K562 (cell line): ENCODE measurements at regions of chr10 and their contacts with region 1.

Region 1: GRCh38 chr10:74262856-74263255 is 111.8 kb downstream of the ADK start:
- DNase-seq: no peak
- ATAC-seq: no peak
- H3K4me3 ChIP-seq: no peak overlapping the region
- H3K27ac ChIP-seq: no peak overlapping the region
- H3K4me1 ChIP-seq: no peaks in the 10 kb centered on the region
- H3K27me3 ChIP-seq: no peaks in the 10 kb centered on the region
- CTCF ChIP-seq: no peak
- EP300 ChIP-seq: no peak
- POLR2A ChIP-seq: no peak
- RAD21 ChIP-seq: no peak

Region 2: DNA sequence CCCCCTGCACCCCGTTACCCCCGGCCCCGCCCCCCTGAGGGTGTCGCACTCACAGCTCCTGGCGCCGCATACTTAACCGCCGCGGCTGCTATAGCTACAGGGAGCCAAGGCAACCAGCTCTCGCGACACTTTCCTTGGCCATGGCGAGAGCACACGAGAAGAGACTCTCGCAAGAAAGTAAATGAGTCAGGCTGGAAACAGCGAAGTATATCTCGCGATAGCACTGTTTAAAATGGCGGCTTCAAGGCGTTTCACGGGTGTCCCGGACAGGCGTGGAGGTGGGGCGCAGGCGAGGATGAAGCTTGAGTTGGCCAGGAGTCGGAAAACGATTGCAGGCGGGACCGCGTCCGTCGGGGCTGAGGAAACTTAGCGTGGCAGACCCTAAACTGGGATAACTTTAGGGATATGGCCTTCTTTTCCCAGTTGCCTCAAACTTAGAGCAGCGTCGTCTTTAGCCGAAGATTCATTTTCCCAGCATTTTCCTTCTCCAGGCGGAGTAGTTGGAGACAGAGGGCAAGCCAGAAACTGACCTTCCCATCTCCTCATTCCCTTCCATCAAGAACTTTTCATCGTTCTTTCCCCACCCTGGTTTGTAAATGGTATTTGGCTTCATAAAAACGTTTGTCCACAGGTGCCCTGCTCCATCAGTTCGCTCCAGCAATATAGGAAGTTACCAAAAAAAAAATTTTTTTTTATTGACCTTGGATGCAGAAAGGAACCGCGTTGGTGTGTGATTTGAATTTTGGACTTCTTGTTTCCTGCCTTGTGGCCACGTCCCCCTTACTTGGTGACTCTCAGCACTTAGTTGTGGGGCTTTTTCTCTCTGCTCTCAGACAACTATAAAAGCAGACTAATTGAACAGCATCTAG is 636.7 kb before region 1 on chr10:
- CTCF ChIA-PET with region 1: no interaction called
- POLR2A ChIA-PET with region 1: no interaction called
- in situ Hi-C with region 1: no loop called
- intact Hi-C with region 1: no loop called
- DNase-seq: peak; percentile 97 to 99 (median 98)
- ATAC-seq: peak; percentile 95
- H3K4me3 ChIP-seq: peak overlapping the region; percentile 86
- H3K27ac ChIP-seq: peak overlapping the region; percentile 87
- H3K4me1 ChIP-seq: peaks cover 7 to 14% of the 10 kb centered on the region in 2 experiments; a peak in 4 of 5 replicates
- H3K27me3 ChIP-seq: no peaks in the 10 kb centered on the region
- CTCF ChIP-seq: 0 out of 6 replicates have a peak, but pooled peaks of 1 of the 3 experiments have one; percentile 10
- EP300 ChIP-seq: no peak; the same call in 1 of the 2 replicates
- POLR2A ChIP-seq: peak; percentile 98
- RAD21 ChIP-seq: no peak

Region 3: GRCh38 chr10:73810735-73811465 is 452.0 kb before region 1 on chr10:
- CTCF ChIA-PET with region 1: no interaction called
- POLR2A ChIA-PET with region 1: no interaction called
- in situ Hi-C with region 1: no loop called
- intact Hi-C with region 1: no loop called
- DNase-seq: peak; percentile 65 to 87 (median 70)
- ATAC-seq: peak; percentile 57
- H3K4me3 ChIP-seq: peak overlapping the region; percentile 85
- H3K27ac ChIP-seq: peak overlapping the region; percentile 85
- H3K4me1 ChIP-seq: peaks cover 30 to 48% of the 10 kb centered on the region in 2 experiments
- H3K27me3 ChIP-seq: no peaks in the 10 kb centered on the region
- CTCF ChIP-seq: no peak
- EP300 ChIP-seq: no peak
- POLR2A ChIP-seq: no peak
- RAD21 ChIP-seq: no peak

Region 4: DNA sequence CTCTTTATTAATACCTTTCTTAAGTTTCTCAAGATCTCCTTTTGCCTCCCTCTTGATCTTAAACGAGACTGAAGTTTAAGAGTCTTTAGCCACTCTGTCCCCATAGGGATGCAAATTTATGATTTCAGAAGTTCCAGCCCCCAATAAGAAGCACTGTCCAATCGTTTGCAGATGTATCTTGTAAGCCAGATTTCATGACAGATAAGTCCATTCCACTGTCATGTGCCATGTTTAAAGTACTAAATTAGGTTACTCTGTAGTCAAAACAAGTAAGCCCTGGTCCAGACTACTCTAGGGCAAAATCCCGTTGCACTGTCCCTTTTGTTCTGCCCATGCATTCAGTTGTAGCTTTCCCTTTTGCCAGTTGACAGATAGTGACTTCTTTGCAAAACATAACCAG is 406.4 kb after region 1 on chr10:
- CTCF ChIA-PET with region 1: no interaction called
- POLR2A ChIA-PET with region 1: no interaction called
- in situ Hi-C with region 1: no loop called
- intact Hi-C with region 1: no loop called
- DNase-seq: no peak
- ATAC-seq: no peak
- H3K4me3 ChIP-seq: no peak overlapping the region
- H3K27ac ChIP-seq: no peak overlapping the region
- H3K4me1 ChIP-seq: no peaks in the 10 kb centered on the region
- H3K27me3 ChIP-seq: no peaks in the 10 kb centered on the region
- CTCF ChIP-seq: no peak
- EP300 ChIP-seq: no peak
- POLR2A ChIP-seq: no peak
- RAD21 ChIP-seq: no peak

Region 5: DNA sequence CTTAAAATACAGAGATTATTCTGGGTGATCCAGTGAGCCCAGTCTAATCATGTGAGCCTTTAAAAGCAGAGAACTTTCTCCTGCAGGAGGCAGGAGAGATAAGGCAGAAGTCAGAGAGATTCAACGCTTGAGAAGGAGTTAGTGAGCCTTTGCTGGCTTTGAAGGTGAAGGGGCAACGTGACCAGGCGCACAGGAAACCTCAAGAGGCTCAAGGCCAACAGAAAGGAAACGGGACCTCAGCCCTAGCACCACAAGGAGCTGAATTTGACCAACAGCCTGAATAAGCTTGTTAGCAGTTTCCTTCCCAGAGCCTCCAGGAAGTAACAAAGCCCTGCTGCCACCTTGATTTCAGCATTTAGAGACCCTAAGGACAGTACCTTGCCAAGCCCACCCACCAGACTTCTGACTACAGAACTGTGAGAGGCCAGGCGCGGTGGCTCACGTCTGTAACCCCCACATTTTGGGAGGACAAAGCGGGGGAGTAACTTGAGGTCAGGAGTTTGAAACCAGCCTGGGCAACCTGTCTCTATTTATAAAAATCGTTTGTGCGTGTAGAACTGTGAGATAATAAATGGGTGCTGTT is 476.2 kb after region 1 on chr10:
- CTCF ChIA-PET with region 1: no interaction called
- POLR2A ChIA-PET with region 1: no interaction called
- in situ Hi-C with region 1: no loop called
- intact Hi-C with region 1: loop called (anchors 5 kb)
- DNase-seq: peak in 2 of 4 experiments; percentile 55 to 74
- ATAC-seq: peak; percentile 91
- H3K4me3 ChIP-seq: no peak overlapping the region
- H3K27ac ChIP-seq: no peak overlapping the region
- H3K4me1 ChIP-seq: peaks cover 3 to 7% of the 10 kb centered on the region in 2 experiments; a peak in 3 of 5 replicates
- H3K27me3 ChIP-seq: no peaks in the 10 kb centered on the region
- CTCF ChIP-seq: peak; percentile 56 to 79 (median 63)
- EP300 ChIP-seq: no peak
- POLR2A ChIP-seq: no peak
- RAD21 ChIP-seq: peak; percentile 81 to 88